Activated naive CD4-positive, alpha-beta T cell treated with anti-CD3 and anti-CD28 coated beads for 36 hours (primary cell): ENCODE measurements at regions of chr4 and their contacts with region 1.

Region 1: DNA sequence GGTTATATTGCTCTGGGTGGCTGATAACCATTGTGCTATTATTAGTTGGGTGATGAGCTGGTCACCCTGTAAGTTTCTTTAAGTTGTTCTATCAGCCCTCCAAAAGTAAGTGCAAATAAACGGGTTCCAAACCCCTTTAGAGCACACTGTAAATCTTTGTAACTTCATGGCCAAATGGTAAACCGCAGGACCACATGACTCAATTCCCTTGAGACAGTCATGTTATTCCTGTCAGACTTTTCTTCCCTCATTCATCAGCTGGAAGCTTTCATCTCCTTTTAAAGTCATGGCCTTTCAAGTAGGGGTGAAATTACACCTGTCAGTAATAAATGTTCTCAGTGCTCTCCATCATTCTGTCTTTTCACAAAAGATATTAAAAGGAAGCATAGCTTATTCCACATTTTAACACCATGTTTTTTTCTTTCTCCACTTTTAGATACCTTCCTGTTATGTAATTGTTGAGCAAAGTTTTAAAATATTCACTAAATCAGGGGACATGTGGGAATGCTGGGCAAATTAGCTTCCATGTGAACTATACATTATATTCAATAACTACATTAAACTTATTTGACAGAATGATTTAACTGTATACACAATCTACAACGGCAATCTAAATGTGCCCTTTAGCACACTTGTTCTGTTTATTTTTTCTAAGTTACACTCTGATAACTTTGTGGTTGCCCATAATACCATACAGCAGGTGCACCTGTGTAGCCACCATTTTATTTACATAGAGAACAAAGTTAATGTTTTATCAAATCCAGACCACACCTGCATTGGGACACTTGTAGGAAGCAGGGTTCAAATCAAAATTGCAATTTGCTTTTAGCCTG is 275.5 kb downstream of the CFAP299 start:
- DNase-seq: no peak
- H3K4me3 Mint-ChIP-seq: no peak overlapping the region
- H3K27ac Mint-ChIP-seq: no peak overlapping the region
- H3K4me1 Mint-ChIP-seq: peaks cover 6% of the 10 kb centered on the region
- H3K27me3 Mint-ChIP-seq: no peaks in the 10 kb centered on the region

Region 2: DNA sequence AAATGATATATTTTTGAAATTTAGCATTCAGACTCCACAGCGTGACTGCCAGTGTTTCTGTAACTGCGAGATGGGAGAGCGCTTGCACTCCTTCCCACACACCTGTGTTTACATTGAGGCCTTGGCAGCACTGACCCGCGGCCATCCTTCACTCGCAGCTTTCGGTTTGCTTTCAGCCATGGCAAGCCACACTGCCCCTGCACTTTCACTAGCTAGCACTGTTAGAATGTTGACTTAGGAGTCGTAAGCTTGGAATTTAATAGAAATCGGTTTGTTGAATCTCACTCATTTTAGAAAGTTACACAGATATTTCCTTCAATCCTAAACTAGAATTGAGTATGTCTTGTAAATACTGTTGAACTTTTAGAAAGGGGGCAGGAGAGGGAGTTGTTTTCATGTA is 139.3 kb before region 1 on chr4:
- CTCF ChIA-PET with region 1: no interaction called
- intact Hi-C with region 1: no loop called
- DNase-seq: no peak
- H3K4me3 Mint-ChIP-seq: no peak overlapping the region
- H3K27ac Mint-ChIP-seq: no peak overlapping the region
- H3K4me1 Mint-ChIP-seq: peaks cover 3% of the 10 kb centered on the region
- H3K27me3 Mint-ChIP-seq: no peaks in the 10 kb centered on the region

Region 3: GRCh38 chr4:81030061-81030980 is 419.3 kb after region 1 on chr4 and contains the start of gene BMP3:
- CTCF ChIA-PET with region 1: no interaction called
- intact Hi-C with region 1: loop called (anchors 10 kb)
- DNase-seq: peak; percentile 5
- H3K4me3 Mint-ChIP-seq: peak within 1 kb of the TSS; percentile 68
- H3K27ac Mint-ChIP-seq: no peak within 1 kb of the TSS
- H3K4me1 Mint-ChIP-seq: peaks cover 14% of the 10 kb centered on the region
- H3K27me3 Mint-ChIP-seq: peaks cover 54% of the 10 kb centered on the region
- total RNA-seq, gene BMP3: not detected